Activated naive CD4-positive, alpha-beta T cell treated with anti-CD3 and anti-CD28 coated beads, Interleukin-2, amount 10 ng/mL, durations not matched to agents 7 days and 5 days (primary cell): ENCODE measurements at regions of chr3 and their contacts with region 1.

Region 1: DNA sequence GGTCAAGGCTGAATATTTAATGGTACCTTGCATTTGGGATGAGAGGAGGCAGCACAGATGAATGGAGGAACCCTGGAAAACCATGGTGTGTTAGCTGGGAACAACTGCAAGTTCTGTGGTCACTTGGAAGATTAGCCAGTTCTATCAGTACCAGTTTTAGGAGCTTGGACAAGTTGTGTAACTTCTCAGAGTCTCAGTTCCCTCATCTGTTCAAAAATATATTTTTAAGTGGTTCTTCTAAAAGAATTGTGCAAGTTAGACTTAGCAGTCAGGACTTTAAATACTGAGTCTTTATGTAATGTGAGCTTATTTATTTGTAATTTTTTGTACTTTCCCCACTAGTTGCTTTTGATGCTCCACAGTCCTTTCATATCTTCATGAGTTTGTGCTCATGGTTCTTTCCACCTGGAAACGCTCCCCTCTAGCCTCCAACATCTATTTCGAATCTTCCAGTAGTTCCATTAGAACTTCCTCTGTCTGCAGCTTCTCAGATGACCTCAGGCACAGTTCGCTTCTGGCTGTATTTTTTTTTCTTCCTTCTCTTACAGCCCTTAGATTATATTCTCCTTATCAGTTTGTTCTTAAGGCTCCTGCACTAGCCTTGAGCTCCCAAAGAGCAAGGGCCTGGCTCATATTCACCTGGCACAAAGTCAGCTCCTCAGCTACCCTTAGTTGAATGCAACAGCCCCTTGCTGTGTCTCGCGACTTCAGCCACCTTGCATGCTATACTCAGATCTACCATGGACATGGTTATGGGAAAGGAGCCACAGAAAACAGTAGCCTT is 27.1 kb downstream of the ITPR1 start:
- DNase-seq: no peak
- H3K4me3 Mint-ChIP-seq: no peak overlapping the region
- H3K27ac Mint-ChIP-seq: peak overlapping the region; percentile 35
- H3K4me1 Mint-ChIP-seq: peaks cover 34% of the 10 kb centered on the region
- H3K27me3 Mint-ChIP-seq: no peaks in the 10 kb centered on the region

Region 2: GRCh38 chr3:4543110-4543509 is 22.9 kb after region 1 on chr3:
- CTCF ChIA-PET with region 1: no interaction called
- DNase-seq: no peak
- H3K4me3 Mint-ChIP-seq: no peak overlapping the region
- H3K27ac Mint-ChIP-seq: no peak overlapping the region
- H3K4me1 Mint-ChIP-seq: no peaks in the 10 kb centered on the region
- H3K27me3 Mint-ChIP-seq: no peaks in the 10 kb centered on the region

Region 3: GRCh38 chr3:4591669-4592068 is 71.4 kb after region 1 on chr3:
- CTCF ChIA-PET with region 1: no interaction called
- DNase-seq: no peak
- H3K4me3 Mint-ChIP-seq: no peak overlapping the region
- H3K27ac Mint-ChIP-seq: no peak overlapping the region
- H3K4me1 Mint-ChIP-seq: peaks cover 7% of the 10 kb centered on the region
- H3K27me3 Mint-ChIP-seq: no peaks in the 10 kb centered on the region

Region 4: GRCh38 chr3:4633078-4634004 is 113.1 kb after region 1 on chr3:
- CTCF ChIA-PET with region 1: interaction called, 25 read pairs
- DNase-seq: no peak
- H3K4me3 Mint-ChIP-seq: no peak overlapping the region
- H3K27ac Mint-ChIP-seq: peak overlapping the region; percentile 16
- H3K4me1 Mint-ChIP-seq: peaks cover 5% of the 10 kb centered on the region
- H3K27me3 Mint-ChIP-seq: no peaks in the 10 kb centered on the region